Right ventricle myocardium superior (tissue), 1 donor: ENCODE measurements at regions of chr7 and their contacts with region 1.

Region 1: DNA sequence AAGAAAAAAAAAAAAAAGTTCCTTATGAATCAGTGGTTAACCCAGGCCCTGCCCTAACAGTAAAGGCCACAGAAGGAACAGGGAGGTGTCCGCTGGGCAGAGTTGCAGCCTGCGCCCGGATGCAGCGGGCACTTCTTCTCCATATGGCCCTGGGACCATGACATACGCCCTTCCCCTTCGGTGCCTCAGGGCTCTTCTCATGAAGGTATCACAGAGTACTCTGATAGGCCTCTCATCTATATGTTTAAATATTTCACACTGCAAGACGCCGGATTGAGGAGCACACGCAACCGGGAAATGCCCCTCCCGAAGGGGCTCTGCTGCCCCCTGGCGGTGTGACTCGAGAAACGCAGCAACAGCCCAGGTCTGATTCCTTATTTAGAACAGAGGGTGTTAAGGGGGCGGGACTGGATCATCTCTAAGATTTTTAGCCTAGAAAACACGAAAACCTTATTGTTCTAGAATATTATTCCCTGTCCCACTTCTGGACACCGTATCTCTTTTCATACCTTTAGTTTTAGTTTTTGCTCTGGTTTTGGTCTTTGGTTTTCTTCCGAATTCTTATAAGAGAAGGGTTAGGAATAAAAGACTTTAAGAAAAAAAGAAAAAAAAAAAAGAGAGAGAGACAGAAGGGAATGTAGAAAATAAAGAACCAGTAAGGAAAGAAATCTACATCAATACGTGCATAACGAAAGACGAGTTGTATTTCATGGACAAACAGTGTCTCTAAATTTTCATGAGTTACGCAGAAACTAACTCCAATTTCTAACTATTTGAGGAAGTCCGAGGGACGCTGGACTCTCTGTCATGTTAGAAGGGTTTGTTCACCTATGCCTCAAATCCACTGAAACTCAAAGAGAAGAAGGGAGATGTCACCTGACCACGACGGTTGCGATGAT is 12.0 kb downstream of the DAGLB start:
- DNase-seq: peak; percentile 85
- ATAC-seq: peak; percentile 90

Region 2: GRCh38 chr7:5997222-5997808 is 438.4 kb before region 1 on chr7:
- intact Hi-C with region 1: loop called (anchors 10 kb)
- DNase-seq: no peak
- ATAC-seq: peak; percentile 79

Region 3: DNA sequence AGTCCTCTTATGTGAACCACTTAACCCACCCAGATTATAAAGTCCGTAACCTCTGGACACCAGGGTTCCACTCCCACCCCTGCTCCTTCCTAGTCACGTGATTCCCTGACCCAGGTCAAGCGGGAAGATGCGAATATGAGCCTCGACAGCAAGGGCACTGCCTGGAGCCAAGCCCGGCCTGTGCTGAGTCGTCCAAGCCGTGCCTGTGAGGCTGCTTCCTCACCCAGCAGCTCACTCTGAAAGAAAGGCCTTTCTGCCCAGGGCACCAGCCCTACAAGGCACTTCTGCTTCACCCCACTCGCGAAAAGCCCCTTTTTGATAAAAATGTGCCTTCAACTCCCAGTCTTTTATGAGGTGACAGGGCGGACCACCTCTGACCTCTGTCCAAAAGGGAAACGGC is 249.1 kb before region 1 on chr7:
- intact Hi-C with region 1: no loop called
- DNase-seq: no peak
- ATAC-seq: no peak

Region 4: GRCh38 chr7:6385110-6385971 is 50.4 kb before region 1 on chr7:
- intact Hi-C with region 1: loop called (anchors 10 kb)
- DNase-seq: no peak
- ATAC-seq: peak; percentile 51